Activated CD8-positive, alpha-beta memory T cell treated with anti-CD3 and anti-CD28 coated beads, Interleukin-2, amount 10 ng/mL, durations not matched to agents 7 days and 5 days (primary cell): ENCODE measurements at regions of chr10 and their contacts with region 1.

Region 1: DNA sequence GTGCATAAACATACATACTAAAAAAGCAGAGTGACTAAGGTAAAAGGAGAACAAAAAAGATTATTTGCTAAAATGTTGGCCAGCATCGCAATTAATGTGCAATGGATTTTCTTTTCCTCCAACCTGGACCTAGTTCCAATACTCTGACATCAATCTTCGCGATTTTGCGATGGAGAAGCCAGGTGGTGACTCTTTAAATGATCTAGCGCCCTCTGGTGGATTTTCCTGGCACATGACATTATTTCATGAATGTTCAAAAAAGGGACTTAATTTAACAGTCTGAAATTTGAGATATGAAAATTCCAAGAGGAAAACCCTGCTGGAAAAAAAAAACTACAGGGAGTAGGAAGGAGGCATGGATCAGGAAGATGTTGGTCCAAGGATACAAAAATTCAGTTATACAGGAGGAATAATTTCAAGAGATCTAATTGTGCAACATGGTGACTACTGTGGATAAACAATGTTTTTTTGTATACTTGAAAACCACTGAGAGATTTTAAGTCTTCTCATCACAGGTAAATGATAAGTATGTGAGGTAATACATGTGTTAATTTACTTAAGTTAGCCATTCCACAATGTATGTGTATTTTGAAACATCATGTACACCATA is 4.3 kb upstream of the KCNMA1 start:
- DNase-seq: peak; percentile 59
- ATAC-seq: no peak
- H3K4me3 Mint-ChIP-seq: no peak overlapping the region
- H3K27ac Mint-ChIP-seq: no peak overlapping the region
- H3K4me1 Mint-ChIP-seq: peaks cover 5% of the 10 kb centered on the region
- H3K27me3 Mint-ChIP-seq: peaks cover 45% of the 10 kb centered on the region

Region 2: DNA sequence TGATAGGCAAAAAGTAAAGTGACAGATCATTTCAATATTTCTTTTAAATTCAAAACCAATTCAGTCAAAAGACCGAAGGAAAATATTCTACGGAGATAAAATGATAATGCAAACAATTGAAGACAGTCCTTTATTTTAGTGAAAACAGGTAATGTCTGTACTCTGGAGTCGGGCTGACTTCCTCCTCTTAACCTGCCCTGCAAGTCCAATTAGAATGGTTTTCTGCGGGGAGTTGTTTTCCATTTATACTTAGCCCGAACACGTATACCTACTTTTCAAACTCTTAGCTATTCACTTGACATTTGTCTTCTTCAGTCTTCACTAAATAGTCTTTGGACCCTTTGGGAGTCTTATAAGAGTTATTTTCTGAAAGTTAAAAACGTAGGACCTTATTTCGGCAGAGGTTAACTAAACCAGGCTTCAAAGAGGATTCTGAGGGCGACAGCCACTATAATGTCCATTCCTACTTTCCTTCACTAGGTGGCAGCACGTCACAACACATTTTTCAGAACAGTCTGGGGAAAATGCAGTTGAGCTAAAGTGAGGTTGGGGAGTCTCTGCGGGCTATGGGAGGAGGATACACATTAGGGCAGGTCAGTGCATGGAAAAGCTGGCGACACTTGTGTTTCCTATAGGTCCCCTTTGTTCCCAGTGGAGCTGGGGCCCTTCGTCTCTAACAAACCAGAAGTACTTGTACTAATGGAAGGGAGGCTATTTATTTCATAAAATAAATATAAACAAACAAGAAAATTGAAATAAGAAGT is 476.3 kb before region 1 on chr10:
- CTCF ChIA-PET with region 1: interaction called, 31 read pairs
- DNase-seq: peak; percentile 51
- ATAC-seq: no peak
- H3K4me3 Mint-ChIP-seq: no peak overlapping the region
- H3K27ac Mint-ChIP-seq: no peak overlapping the region
- H3K4me1 Mint-ChIP-seq: no peaks in the 10 kb centered on the region
- H3K27me3 Mint-ChIP-seq: peaks cover 29% of the 10 kb centered on the region